Activated B cell treated with CpG ODN at 0.5 μM for 24 hours (primary cell): ENCODE measurements at regions of chr7 and their contacts with region 1.

Region 1: GRCh38 chr7:80453699-80454340 is 58.0 kb downstream of the GNAT3 start:
- DNase-seq: no peak
- ATAC-seq: no peak
- H3K4me3 Mint-ChIP-seq: no peak overlapping the region
- H3K27ac Mint-ChIP-seq: no peak overlapping the region
- H3K4me1 Mint-ChIP-seq: no peaks in the 10 kb centered on the region
- H3K27me3 Mint-ChIP-seq: no peaks in the 10 kb centered on the region
- CTCF ChIP-seq: no peak

Region 2: GRCh38 chr7:80679921-80680907 is 226.4 kb after region 1 on chr7:
- CTCF ChIA-PET with region 1: no interaction called
- POLR2A ChIA-PET with region 1: interaction called, 16 read pairs
- intact Hi-C with region 1: no loop called
- DNase-seq: no peak
- ATAC-seq: no peak
- H3K4me3 Mint-ChIP-seq: no peak overlapping the region
- H3K27ac Mint-ChIP-seq: no peak overlapping the region
- H3K4me1 Mint-ChIP-seq: peaks cover 5% of the 10 kb centered on the region
- H3K27me3 Mint-ChIP-seq: no peaks in the 10 kb centered on the region
- CTCF ChIP-seq: no peak